ENCODE measurements at regions of chr15 and their contacts with region 1.

Region 1: GRCh38 chr15:81176291-81176893 is 20.3 kb upstream of the IL16 start:
- DNase-seq: peak; percentile 77
- ATAC-seq: peak; percentile 89

Region 2: GRCh38 chr15:81108427-81108826 is 68.0 kb before region 1 on chr15:
- intact Hi-C with region 1: no loop called
- DNase-seq: no peak
- ATAC-seq: no peak

Region 3: GRCh38 chr15:81256916-81257315 is 80.5 kb after region 1 on chr15:
- intact Hi-C with region 1: loop called (anchors 5 kb)
- DNase-seq: no peak
- ATAC-seq: peak; percentile 69